ENCODE measurements at regions of chr5 and their contacts with region 1.

Region 1: DNA sequence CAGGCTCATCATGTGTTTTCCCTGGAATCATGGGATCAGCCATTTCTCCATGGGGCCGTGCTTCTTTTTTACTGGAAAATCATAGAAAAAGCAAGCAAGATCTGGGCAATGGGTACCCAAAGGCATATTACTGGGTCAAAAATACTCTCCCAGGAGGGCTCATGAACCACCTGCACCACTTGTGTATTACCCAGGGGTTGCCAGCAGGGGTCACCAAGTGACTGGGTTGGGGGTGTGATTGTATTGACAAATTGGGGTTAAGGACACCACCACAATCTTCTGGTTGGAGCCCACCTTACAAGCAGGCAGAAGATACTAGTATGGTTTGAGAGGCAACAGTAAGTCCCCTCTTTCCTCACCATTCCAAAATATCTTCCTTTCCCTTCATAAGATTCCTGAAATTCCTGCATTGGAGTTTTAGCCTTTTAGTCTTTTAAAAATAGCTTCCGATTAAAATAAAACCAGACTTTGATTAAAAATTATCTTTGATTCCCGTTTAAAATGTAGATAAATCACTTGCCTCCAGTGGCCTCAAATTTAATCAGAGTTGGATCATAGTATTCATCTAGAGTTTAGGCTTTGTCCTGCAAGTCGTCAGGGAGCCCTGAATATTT is 603.3 kb downstream of the KIF4B start:
- DNase-seq: peak; percentile 21 to 85 (median 69)

Region 2: DNA sequence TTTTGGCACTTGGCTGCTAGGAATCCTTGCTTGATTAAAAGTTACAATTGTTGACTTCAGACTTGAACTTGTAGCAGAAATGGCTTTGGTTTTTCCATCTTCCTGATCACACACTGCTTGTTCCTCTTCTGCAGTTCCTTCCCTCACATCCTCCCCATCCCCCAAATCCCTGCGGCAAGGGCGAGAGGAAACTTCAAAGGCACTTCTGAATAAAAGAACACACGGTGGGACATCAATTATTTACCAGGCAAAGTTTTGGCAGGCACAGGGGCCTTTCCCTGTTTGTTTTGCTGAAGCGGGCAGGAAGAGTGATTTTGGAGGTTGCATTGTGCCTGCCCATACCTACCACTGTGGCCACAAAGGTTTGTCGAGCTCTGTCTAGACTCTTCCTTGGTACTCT is 342.4 kb before region 1 on chr5:
- intact Hi-C with region 1: no loop called
- DNase-seq: no peak

Region 3: DNA sequence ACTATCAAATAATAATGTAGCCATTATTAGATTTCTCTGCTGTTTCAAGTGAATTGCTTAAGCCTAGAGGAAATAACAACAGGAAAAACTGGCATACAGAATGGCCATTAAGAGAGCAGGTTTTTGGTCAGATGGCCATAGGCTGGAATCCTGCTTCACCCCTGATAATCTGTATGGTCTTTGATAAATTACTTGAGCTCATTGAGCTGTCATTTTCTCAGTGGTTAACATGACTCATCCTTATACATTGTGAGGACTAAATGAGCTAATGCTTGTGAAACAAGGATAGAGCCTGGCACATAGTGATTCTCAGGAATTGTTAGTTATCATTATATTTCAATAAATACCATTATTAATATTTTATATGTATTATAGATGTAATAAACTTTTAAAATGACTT is 86.8 kb before region 1 on chr5:
- intact Hi-C with region 1: no loop called
- DNase-seq: no peak

Region 4: GRCh38 chr5:155884041-155884440 is 267.2 kb after region 1 on chr5:
- intact Hi-C with region 1: no loop called
- DNase-seq: no peak

Region 5: DNA sequence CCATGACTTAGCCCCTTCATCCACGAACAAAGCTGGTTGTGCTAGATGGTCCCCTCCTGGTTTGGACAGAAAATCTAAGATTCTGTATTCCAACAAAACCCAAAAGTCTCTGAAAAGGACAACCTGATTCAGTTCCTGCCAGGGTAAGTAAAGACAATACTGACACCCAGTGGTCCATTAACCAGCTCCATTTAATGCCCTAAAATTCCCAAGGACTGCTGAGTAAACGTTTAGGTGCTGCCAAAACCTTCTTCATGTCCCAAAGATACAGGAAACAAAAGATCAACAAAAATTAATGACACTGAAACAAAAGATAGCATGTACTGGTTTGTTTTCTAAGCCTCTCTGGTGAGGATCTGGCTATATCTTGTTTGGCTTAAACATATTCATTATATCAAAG is 1207.9 kb after region 1 on chr5:
- intact Hi-C with region 1: loop called (anchors 10 kb)
- DNase-seq: peak in 16 of 42 donors; percentile 5 to 73 (median 34)

Measured in head of caudate nucleus (tissue), 42 donors.